ENCODE measurements at regions of chr14 and their contacts with region 1.

Region 1: DNA sequence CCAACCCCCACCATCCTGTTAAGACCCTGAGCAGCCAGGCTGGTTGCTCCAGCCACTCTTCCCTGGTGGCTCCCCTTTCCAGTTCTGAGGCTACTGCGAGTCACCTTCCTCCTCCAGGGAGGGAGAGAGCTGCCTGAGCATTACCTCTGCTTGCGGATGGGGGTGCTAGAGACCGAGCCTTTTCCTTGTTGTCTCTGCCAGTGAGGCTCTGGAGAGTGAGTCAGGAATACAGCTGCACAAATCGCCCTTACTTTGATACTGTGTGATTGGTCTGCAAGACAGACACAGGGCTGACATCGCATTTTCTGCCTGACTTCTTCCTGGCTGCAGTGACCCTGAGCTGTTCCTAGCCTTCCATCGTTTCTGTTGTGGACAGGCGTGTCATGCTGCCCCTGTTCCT is 94.3 kb downstream of the SLC25A47 start:
- ATAC-seq: peak; percentile 88 to 99 (median 96)
- H3K4me3 ChIP-seq: no peak overlapping the region
- H3K27ac ChIP-seq: no peak overlapping the region
- H3K4me1 ChIP-seq: peaks cover 21 to 32% of the 10 kb centered on the region in 2 donors

Region 2: DNA sequence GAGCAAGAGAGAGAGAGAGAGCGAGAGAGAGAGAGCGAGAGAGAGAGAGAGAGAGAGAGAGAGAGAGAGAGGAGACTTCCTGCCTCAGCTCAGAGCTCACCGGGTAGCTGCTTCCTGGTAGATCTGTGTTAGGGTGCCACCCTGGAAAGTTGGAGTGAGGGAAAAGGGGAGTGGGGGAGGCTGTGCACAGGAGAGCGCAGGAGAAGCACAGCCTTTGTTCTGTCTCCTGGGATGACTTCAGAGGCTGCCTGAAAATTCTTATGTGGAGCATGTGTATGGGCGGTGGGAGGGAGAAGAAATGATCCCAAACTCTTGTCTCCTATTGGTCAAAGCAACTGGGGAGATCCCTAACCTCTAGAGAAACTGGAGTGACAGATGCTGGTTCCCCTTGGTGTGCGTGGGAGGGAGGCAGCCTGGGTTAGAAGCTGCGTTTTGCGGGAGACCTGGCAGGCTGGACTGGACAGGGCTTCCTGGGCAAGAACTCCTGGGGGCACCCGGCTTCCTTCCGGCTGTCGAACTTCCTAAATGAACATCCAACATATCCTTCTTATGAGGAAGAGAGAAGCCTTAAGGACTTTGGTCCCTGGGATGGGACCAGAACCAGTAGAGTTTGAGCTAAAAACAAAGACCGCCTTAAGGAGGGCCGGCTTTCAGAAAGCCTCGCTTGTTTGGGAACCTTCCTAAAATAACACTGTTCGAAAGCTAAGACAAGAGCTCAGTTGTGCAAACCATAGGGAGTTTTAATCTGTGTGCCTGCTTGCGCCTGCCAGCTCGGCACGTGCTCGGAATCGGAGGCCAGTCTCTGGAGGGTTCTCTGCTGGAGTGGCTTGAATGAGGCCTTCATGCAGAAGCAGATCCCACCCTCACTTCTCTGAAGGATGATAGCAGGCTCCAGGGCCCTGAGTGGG is 200.2 kb after region 1 on chr14:
- in situ Hi-C with region 1: loop called in 1 of 9 experiments (anchors 25 kb)
- ATAC-seq: peak in 1 of 8 experiments; percentile 25
- H3K4me3 ChIP-seq: no peak overlapping the region
- H3K27ac ChIP-seq: no peak overlapping the region
- H3K4me1 ChIP-seq: peaks cover 37 to 43% of the 10 kb centered on the region in 2 donors

Region 3: GRCh38 chr14:100645192-100645990 is 227.9 kb after region 1 on chr14:
- in situ Hi-C with region 1: loop called in 1 of 9 experiments (anchors 25 kb)
- ATAC-seq: peak; percentile 63 to 96 (median 84)
- H3K4me3 ChIP-seq: no peak overlapping the region
- H3K27ac ChIP-seq: no peak overlapping the region
- H3K4me1 ChIP-seq: peaks cover 0 to 6% of the 10 kb centered on the region in 2 donors

Region 4: DNA sequence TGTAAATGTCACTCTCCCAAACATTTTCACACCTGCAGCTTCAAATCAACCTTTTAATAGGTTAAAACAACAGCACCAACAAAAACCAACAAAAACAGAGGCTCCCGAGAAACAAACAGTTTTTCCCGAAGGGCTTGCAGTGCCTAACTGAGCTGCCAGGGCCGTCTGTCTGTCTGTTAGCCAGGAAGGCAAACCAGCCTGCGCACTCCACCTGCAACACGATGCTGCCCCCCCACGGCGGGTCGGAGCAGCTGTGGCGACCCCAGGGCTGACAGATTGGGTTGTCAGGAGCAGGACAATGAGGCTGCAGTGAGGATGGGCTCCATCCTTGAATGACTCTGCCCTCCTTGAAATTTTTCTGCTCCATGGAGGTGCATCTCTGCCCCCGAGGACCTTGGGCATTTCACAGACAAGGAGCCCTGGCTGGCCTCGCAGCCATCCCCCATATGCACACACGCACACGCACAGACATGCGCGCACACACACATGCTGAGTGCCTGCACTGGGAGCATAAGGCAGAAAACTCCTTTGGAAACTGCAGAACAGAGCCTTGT is 483.4 kb after region 1 on chr14:
- in situ Hi-C with region 1: loop called in 1 of 9 experiments (anchors 25 kb)
- ATAC-seq: peak in 7 of 8 experiments; percentile 33 to 48 (median 42)
- H3K4me3 ChIP-seq: no peak overlapping the region
- H3K27ac ChIP-seq: no peak overlapping the region
- H3K4me1 ChIP-seq: peaks cover 54 to 87% of the 10 kb centered on the region in 2 donors

Region 5: DNA sequence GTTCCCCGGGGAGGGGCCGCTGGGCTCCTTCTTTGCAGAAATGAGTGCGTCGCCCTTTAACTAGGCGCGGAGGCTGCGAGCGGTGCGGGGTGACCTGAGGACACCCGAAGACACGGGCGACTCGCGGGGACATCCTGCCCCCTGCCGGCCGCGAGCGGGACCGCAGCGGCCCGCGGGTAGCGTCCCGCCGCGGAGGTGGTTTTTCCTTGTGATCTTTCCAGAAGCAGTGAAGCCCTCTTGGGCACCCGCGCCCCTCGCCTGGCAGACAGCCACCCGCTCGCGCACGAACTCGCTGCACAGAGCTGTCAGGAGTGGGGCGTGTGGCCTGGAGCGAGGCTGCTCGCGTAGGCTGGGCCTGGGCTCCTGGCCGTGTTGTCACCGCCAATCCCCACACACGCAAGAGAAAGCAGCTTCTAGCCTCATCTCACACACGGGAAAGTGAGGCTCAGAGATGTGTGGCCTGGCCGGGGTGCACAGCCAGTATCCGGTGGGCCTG is 1211.1 kb after region 1 on chr14:
- in situ Hi-C with region 1: loop called in 1 of 9 experiments (anchors 25 kb)
- ATAC-seq: peak; percentile 73 to 96 (median 78)
- H3K4me3 ChIP-seq: no peak overlapping the region
- H3K27ac ChIP-seq: no peak overlapping the region
- H3K4me1 ChIP-seq: peaks cover 29 to 32% of the 10 kb centered on the region in 2 donors

Measured in motor neuron (in vitro differentiated cells).